ENCODE measurements at regions of chr11 and their contacts with region 1.

Region 1: GRCh38 chr11:72141066-72141465 is 5.5 kb downstream of the FOLR3 start:
- DNase-seq: peak; percentile 72
- H3K4me3 Mint-ChIP-seq: no peak overlapping the region
- H3K27ac Mint-ChIP-seq: peak overlapping the region; percentile 13
- H3K4me1 Mint-ChIP-seq: peaks cover 21% of the 10 kb centered on the region
- H3K27me3 Mint-ChIP-seq: peaks cover 11% of the 10 kb centered on the region

Region 2: DNA sequence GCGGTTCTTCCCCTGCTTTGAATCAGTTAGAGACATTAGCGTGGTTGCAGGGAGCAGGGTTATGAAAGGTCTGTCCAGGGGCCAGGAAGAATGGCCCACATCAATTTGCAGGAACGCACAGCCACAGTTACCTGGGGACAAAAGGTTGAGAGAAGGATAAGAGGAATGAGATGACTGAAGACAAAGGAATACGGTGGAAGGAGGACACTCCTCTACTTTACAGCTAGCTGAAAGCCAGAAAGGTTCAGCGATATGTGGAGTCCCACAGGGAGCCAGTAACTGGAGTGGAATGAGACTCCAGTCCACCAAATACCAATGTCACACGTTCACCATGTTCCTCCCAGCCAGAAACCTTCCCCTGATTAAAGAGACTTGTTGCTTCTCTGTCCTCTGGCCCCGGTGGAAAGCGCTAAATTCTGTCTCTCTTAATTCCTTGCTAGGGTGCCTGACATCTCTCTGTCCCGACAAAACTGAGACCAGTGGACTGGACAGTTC is 223.4 kb before region 1 on chr11:
- CTCF ChIA-PET with region 1: no interaction called
- POLR2A ChIA-PET with region 1: no interaction called
- intact Hi-C with region 1: no loop called
- DNase-seq: no peak
- H3K4me3 Mint-ChIP-seq: no peak overlapping the region
- H3K27ac Mint-ChIP-seq: no peak overlapping the region
- H3K4me1 Mint-ChIP-seq: peaks cover 16% of the 10 kb centered on the region
- H3K27me3 Mint-ChIP-seq: no peaks in the 10 kb centered on the region

Region 3: GRCh38 chr11:71936825-71937224 is 204.2 kb before region 1 on chr11:
- CTCF ChIA-PET with region 1: no interaction called
- POLR2A ChIA-PET with region 1: no interaction called
- intact Hi-C with region 1: no loop called
- DNase-seq: no peak
- H3K4me3 Mint-ChIP-seq: no peak overlapping the region
- H3K27ac Mint-ChIP-seq: no peak overlapping the region
- H3K4me1 Mint-ChIP-seq: peaks cover 23% of the 10 kb centered on the region
- H3K27me3 Mint-ChIP-seq: no peaks in the 10 kb centered on the region

Region 4: GRCh38 chr11:71977743-71978418 is 163.2 kb before region 1 on chr11:
- CTCF ChIA-PET with region 1: interaction called, 41 read pairs
- POLR2A ChIA-PET with region 1: no interaction called
- intact Hi-C with region 1: loop called (anchors 2 kb)
- DNase-seq: peak; percentile 55
- H3K4me3 Mint-ChIP-seq: no peak overlapping the region
- H3K27ac Mint-ChIP-seq: no peak overlapping the region
- H3K4me1 Mint-ChIP-seq: peaks cover 3% of the 10 kb centered on the region
- H3K27me3 Mint-ChIP-seq: no peaks in the 10 kb centered on the region

Region 5: GRCh38 chr11:72030472-72031045 is 110.5 kb before region 1 on chr11:
- CTCF ChIA-PET with region 1: interaction called, 118 read pairs
- POLR2A ChIA-PET with region 1: interaction called, 3 read pairs
- intact Hi-C with region 1: loop called (anchors 1 kb)
- DNase-seq: no peak
- H3K4me3 Mint-ChIP-seq: no peak overlapping the region
- H3K27ac Mint-ChIP-seq: peak overlapping the region; percentile 38
- H3K4me1 Mint-ChIP-seq: peaks cover 27% of the 10 kb centered on the region
- H3K27me3 Mint-ChIP-seq: no peaks in the 10 kb centered on the region

Region 6: DNA sequence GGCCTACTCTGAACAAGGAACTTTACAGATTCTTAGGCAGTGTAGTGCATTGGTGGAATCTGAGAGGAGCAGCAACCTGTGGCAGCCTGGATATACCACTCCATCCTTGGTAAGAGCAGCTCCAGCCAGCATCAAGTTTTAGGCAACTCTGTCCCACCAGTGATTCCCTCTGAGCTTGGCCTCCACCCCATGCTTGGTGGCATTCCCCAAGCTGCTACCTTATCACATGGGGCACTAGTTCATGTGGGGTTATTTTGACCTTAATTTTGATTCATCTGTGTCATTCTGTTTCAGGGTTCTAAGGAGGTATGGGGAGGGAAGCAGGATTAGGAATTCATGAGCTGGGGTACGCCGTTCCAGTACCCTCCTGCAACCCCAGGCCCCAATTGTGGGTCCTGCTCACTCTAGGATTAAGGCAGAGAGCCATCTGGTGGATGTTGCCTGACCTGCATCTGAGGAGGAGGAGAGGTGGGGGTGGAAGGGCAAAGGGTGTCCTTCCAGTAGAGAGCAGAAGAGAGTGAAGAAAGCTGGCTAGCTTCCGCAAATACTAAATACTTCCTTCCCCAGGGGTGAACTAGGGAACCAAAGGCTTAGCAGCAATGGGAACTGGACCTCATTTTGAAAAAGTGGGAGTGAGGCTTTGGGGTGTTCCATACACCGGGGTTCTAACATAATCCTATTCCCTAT is 49.9 kb before region 1 on chr11:
- CTCF ChIA-PET with region 1: interaction called, 18 read pairs
- POLR2A ChIA-PET with region 1: no interaction called
- intact Hi-C with region 1: no loop called
- DNase-seq: peak; percentile 76
- H3K4me3 Mint-ChIP-seq: no peak overlapping the region
- H3K27ac Mint-ChIP-seq: no peak overlapping the region
- H3K4me1 Mint-ChIP-seq: peaks cover 11% of the 10 kb centered on the region
- H3K27me3 Mint-ChIP-seq: no peaks in the 10 kb centered on the region

Region 7: GRCh38 chr11:72125951-72126350 is 15.1 kb before region 1 on chr11:
- CTCF ChIA-PET with region 1: interaction called, 21 read pairs
- POLR2A ChIA-PET with region 1: interaction called, 3 read pairs
- intact Hi-C with region 1: no loop called
- DNase-seq: no peak
- H3K4me3 Mint-ChIP-seq: no peak overlapping the region
- H3K27ac Mint-ChIP-seq: no peak overlapping the region
- H3K4me1 Mint-ChIP-seq: no peaks in the 10 kb centered on the region
- H3K27me3 Mint-ChIP-seq: peaks cover 9% of the 10 kb centered on the region

Region 8: GRCh38 chr11:72189461-72190275 is 48.6 kb after region 1 on chr11:
- CTCF ChIA-PET with region 1: interaction called, 34 read pairs
- POLR2A ChIA-PET with region 1: no interaction called
- intact Hi-C with region 1: no loop called
- DNase-seq: no peak
- H3K4me3 Mint-ChIP-seq: no peak overlapping the region
- H3K27ac Mint-ChIP-seq: no peak overlapping the region
- H3K4me1 Mint-ChIP-seq: no peaks in the 10 kb centered on the region
- H3K27me3 Mint-ChIP-seq: no peaks in the 10 kb centered on the region